CD4-positive, alpha-beta T cell (primary cell): ENCODE measurements at regions of chr18 and their contacts with region 1.

Region 1: DNA sequence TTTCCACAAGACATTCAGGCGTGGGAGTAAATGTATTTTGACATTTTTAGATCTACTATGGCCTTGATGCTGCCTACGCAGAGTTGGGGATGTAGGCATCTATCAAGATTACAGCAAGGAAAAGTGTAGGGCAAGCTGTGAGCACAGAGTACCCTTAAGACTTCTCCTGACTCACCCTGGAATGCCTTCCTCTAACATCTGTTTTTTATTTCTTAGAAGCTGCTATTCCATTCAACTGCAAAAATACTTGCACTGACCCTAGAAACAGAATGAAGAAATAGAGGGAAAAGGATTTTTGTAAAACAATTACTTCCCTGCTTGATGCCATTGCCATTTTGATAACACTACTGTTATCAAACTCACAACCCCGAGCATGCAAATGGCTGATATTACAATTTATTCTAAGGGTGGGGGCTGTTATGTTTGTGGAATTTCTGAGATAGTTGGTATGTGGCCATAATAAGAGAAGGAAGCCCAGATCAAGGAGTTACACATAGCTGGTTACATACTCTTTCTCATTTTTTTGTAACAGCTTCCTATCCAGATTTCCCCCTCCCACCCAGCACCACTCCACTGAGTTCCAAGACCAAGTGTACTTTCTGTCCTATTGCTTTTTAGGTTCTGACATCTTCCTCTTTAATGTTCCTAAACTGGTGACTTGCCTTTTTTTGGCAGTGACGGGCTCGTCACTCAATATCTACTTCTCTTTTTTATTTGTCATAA is 6.0 kb upstream of the ROCK1 start:
- DNase-seq: peak in 3 of 14 experiments; percentile 14 to 51 (median 39)
- ATAC-seq: no peak
- H3K4me3 ChIP-seq: no peak overlapping the region
- H3K4me3 Mint-ChIP-seq: no peak overlapping the region
- H3K27ac ChIP-seq: no peak overlapping the region
- H3K27ac Mint-ChIP-seq: no peak overlapping the region
- H3K4me1 ChIP-seq: peaks cover 2% of the 10 kb centered on the region
- H3K4me1 Mint-ChIP-seq: peaks cover 1% of the 10 kb centered on the region
- H3K27me3 ChIP-seq: no peaks in the 10 kb centered on the region
- H3K27me3 Mint-ChIP-seq: no peaks in the 10 kb centered on the region
- CTCF ChIP-seq: no peak

Region 2: DNA sequence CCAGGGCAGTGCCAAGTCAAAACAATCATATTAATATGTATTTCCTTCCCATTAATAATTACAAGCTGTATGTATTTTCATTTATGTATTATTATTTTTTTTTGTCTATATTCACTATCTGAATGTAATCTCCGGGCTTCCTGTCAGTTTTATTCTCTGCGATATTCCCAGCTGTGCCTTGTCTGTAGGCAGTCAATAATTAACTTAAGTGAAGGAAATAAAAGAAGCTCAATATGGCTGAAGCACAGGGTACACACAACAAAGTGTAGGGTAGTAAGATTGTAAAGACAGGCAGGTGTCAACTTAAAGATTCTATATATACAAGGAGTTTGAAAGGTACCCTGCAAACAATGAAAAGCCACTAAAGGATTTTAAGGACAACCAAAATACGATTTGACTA is 128.8 kb before region 1 on chr18:
- CTCF ChIA-PET with region 1: no interaction called
- POLR2A ChIA-PET with region 1: no interaction called
- intact Hi-C with region 1: loop called in 1 of 2 experiments (anchors 5 kb)
- DNase-seq: no peak
- ATAC-seq: no peak
- H3K4me3 ChIP-seq: no peak overlapping the region
- H3K4me3 Mint-ChIP-seq: no peak overlapping the region
- H3K27ac ChIP-seq: no peak overlapping the region
- H3K27ac Mint-ChIP-seq: peak overlapping the region; percentile 18
- H3K4me1 ChIP-seq: no peaks in the 10 kb centered on the region
- H3K4me1 Mint-ChIP-seq: no peaks in the 10 kb centered on the region
- H3K27me3 ChIP-seq: no peaks in the 10 kb centered on the region
- H3K27me3 Mint-ChIP-seq: no peaks in the 10 kb centered on the region
- CTCF ChIP-seq: no peak

Region 3: GRCh38 chr18:21270453-21270852 is 152.9 kb after region 1 on chr18:
- CTCF ChIA-PET with region 1: no interaction called
- POLR2A ChIA-PET with region 1: no interaction called
- intact Hi-C with region 1: no loop called
- DNase-seq: no peak
- ATAC-seq: no peak
- H3K4me3 ChIP-seq: no peak overlapping the region
- H3K4me3 Mint-ChIP-seq: no peak overlapping the region
- H3K27ac ChIP-seq: no peak overlapping the region
- H3K27ac Mint-ChIP-seq: no peak overlapping the region
- H3K4me1 ChIP-seq: no peaks in the 10 kb centered on the region
- H3K4me1 Mint-ChIP-seq: no peaks in the 10 kb centered on the region
- H3K27me3 ChIP-seq: no peaks in the 10 kb centered on the region
- H3K27me3 Mint-ChIP-seq: peaks cover 8% of the 10 kb centered on the region
- CTCF ChIP-seq: no peak